IMR-90 (cell line): ENCODE measurements at regions of chr10 and their contacts with region 1.

Region 1: GRCh38 chr10:122374237-122374869 is at the start of gene PLEKHA1:
- DNase-seq: peak; percentile 91
- ATAC-seq: peak; percentile 93
- H3K4me3 ChIP-seq: peak within 1 kb of the TSS; percentile 100
- H3K27ac ChIP-seq: peak within 1 kb of the TSS; percentile 51
- H3K4me1 ChIP-seq: no peaks in the 10 kb centered on the region
- H3K27me3 ChIP-seq: no peaks in the 10 kb centered on the region; the same call in 1 of the 2 replicates
- CTCF ChIP-seq: no peak
- POLR2A ChIP-seq: no peak
- RAD21 ChIP-seq: no peak
- total RNA-seq, gene PLEKHA1: 7.2 and 12.5 TPM in 2 replicates

Region 2: DNA sequence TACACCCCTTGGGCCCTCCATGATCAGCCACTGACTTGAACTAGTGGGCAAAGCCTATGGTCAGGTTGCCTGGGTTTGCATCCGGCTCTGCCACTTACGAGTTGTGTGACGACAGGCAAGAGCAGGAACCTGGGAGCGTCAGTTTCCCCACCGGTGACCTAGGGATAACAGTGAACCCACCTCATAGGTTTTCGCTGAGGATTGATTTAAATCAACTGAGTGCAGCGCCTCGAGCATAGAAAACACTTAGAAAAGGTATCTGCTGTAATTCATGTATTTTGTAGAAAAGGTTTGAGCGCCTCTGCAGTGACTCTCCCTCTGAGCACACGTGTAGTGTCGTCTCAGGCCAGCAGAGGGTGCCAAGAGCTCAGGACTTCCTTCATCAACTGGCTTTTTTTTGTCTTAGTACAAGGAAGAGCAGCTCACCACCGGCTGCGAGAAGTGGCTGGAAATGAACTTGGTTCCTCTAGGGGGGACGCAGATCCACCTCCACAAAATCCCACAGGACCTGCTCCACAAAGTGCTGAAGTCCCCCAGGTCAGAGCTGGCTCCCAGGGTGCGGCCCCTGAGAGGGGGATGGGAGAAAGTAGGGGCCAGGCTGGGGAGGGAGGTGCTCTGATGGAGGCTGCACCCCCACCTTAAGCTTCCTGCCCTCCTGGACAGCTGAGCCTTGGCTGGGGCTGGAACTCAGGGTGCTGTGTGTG is 75.6 kb before region 1 on chr10:
- CTCF ChIA-PET with region 1: no interaction called
- POLR2A ChIA-PET with region 1: no interaction called
- dilution Hi-C with region 1: no loop called
- in situ Hi-C with region 1: no loop called
- intact Hi-C with region 1: loop called (anchors 5 kb)
- DNase-seq: peak; percentile 72
- ATAC-seq: peak; percentile 99
- H3K4me3 ChIP-seq: no peak overlapping the region
- H3K27ac ChIP-seq: no peak overlapping the region
- H3K4me1 ChIP-seq: peaks cover 5% of the 10 kb centered on the region
- H3K27me3 ChIP-seq: peaks cover 15% of the 10 kb centered on the region; the same call in 1 of the 2 replicates
- CTCF ChIP-seq: peak; percentile 95
- POLR2A ChIP-seq: 0 out of 2 replicates have a peak, but pooled peaks have one; percentile 34
- RAD21 ChIP-seq: peak; percentile 98

Region 3: DNA sequence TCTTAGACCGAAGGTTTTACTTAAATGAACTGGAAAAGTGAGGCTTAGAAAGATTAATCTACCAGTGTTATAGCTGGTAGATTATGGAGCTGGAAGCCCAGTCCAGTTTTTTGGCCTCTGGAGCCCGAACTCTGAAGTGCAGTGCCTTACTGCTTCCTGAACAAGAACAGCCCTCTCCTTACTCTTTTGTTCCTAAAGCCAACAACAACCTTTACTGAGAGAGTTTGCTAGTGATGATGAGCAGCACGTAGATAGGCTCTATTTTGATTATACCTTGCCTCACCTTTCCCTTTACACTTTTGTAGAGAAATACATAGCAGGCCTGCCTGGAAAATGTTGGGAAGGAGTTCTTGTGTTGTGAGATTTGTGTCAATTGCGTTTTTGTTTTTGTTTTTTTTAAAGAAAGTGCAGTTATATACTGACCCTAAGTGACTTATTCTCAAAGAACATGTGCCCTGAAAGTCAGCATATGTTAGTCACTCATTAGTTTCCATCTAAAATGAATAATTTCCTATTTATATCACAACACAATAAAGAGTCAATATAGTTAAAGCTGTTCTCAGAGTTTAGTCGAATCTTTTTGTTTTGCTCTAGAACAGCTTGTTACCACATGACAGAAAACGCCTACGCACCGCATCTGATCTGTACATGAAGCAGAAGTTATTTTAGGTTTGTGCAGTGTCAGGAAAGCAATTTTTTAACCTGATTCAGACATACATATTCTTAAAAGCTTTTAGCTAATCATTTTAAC is 33.2 kb after region 1 on chr10:
- CTCF ChIA-PET with region 1: interaction called, 12 read pairs
- POLR2A ChIA-PET with region 1: no interaction called
- dilution Hi-C with region 1: no loop called
- in situ Hi-C with region 1: no loop called
- intact Hi-C with region 1: no loop called
- DNase-seq: no peak
- ATAC-seq: no peak
- H3K4me3 ChIP-seq: no peak overlapping the region
- H3K27ac ChIP-seq: no peak overlapping the region
- H3K4me1 ChIP-seq: no peaks in the 10 kb centered on the region
- H3K27me3 ChIP-seq: no peaks in the 10 kb centered on the region
- CTCF ChIP-seq: no peak
- POLR2A ChIP-seq: no peak
- RAD21 ChIP-seq: no peak

Region 4: GRCh38 chr10:122419876-122420623 is 45.7 kb after region 1 on chr10:
- CTCF ChIA-PET with region 1: no interaction called
- POLR2A ChIA-PET with region 1: no interaction called
- dilution Hi-C with region 1: no loop called
- in situ Hi-C with region 1: no loop called
- intact Hi-C with region 1: loop called (anchors 5 kb)
- DNase-seq: peak; percentile 85
- ATAC-seq: peak; percentile 66
- H3K4me3 ChIP-seq: no peak overlapping the region
- H3K27ac ChIP-seq: no peak overlapping the region
- H3K4me1 ChIP-seq: peaks cover 4% of the 10 kb centered on the region
- H3K27me3 ChIP-seq: no peaks in the 10 kb centered on the region
- CTCF ChIP-seq: no peak
- POLR2A ChIP-seq: no peak
- RAD21 ChIP-seq: no peak